CD8-positive, alpha-beta memory T cell (primary cell): ENCODE measurements at regions of chr14 and their contacts with region 1.

Region 1: DNA sequence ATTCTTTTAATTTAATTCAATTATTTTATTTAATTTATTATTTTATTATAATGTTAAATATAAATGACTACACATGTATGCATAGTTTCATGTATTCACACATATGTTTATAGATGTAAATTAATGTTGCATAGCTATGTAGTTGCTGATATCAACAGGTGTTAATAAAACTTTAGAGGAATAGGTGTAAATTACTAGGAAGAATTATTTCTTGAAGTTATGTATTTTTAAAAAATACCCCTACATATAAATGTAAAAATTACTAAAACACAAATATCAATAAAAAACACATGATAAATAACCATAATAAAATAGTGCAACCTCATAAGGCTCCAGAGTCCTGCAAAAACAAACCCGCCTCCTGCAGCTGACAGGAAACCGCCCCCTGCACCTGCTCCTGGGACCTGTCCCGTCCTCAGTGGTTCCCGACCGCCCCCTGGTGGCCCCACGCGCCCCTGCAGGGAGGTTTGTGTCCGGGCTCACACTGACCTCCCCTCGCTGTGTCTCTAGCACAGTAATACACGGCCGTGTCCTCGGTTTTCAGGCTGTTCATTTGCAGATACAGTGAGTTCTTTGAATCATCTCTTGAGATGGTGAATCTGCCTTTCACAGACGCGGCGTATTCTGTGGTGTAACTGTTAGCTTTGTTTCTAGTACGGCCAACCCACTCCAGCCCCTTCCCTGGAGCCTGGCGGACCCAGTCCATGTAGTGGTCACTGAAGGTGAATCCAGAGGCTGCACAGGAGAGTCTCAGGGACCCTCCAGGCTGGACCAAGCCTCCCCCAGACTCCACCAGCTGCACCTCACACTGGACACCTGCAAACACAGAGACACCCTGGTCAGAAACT is 1264.0 kb downstream of the TMEM121 start:
- DNase-seq: peak; percentile 42 to 75 (median 53)
- H3K4me3 ChIP-seq: no peak overlapping the region
- H3K4me3 Mint-ChIP-seq: no peak overlapping the region
- H3K27ac ChIP-seq: no peak overlapping the region
- H3K27ac Mint-ChIP-seq: no peak overlapping the region
- H3K4me1 ChIP-seq: peaks cover 4% of the 10 kb centered on the region
- H3K4me1 Mint-ChIP-seq: peaks cover 6 to 12% (median 11%) of the 10 kb centered on the region in 3 donors
- H3K27me3 ChIP-seq: no peaks in the 10 kb centered on the region
- H3K27me3 Mint-ChIP-seq: peaks cover 11 to 40% of the 10 kb centered on the region in 2 donors

Region 2: GRCh38 chr14:105830171-105830570 is 960.2 kb before region 1 on chr14:
- CTCF ChIA-PET with region 1: no interaction called
- POLR2A ChIA-PET with region 1: no interaction called
- DNase-seq: no peak
- H3K4me3 ChIP-seq: no peak overlapping the region
- H3K4me3 Mint-ChIP-seq: no peak overlapping the region
- H3K27ac ChIP-seq: no peak overlapping the region
- H3K27ac Mint-ChIP-seq: no peak overlapping the region
- H3K4me1 ChIP-seq: no peaks in the 10 kb centered on the region
- H3K4me1 Mint-ChIP-seq: peaks cover 0 to 3% (median 0%) of the 10 kb centered on the region in 3 donors
- H3K27me3 ChIP-seq: no peaks in the 10 kb centered on the region
- H3K27me3 Mint-ChIP-seq: peaks cover 18 to 29% of the 10 kb centered on the region in 2 donors

Region 3: GRCh38 chr14:106776395-106776983 is 13.9 kb before region 1 on chr14:
- CTCF ChIA-PET with region 1: interaction called, 10 read pairs
- POLR2A ChIA-PET with region 1: no interaction called
- DNase-seq: no peak
- H3K4me3 ChIP-seq: no peak overlapping the region
- H3K4me3 Mint-ChIP-seq: no peak overlapping the region
- H3K27ac ChIP-seq: no peak overlapping the region
- H3K27ac Mint-ChIP-seq: no peak overlapping the region
- H3K4me1 ChIP-seq: no peaks in the 10 kb centered on the region
- H3K4me1 Mint-ChIP-seq: peaks cover 9 to 12% (median 9%) of the 10 kb centered on the region in 3 donors
- H3K27me3 ChIP-seq: no peaks in the 10 kb centered on the region
- H3K27me3 Mint-ChIP-seq: peaks cover 15 to 28% of the 10 kb centered on the region in 2 donors

Region 4: DNA sequence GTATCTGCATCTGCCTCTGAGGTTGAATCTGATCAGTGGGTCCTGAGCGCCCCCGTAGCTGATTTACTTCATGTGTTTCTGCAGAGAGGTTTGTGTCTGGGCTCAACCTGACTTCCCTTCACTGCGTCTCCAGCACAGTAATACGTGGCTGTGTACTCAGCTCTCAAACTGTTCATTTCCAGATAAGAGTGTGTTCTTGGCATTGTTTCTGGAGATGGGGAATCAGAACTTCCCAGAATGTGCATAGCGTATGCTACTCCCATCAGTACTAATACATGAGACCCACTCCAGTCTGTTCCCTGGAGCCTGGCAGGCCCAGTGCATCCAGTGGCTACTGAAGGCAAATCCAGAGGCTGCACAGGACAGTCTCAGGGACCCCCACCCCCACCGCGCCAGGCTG is 33.1 kb after region 1 on chr14:
- CTCF ChIA-PET with region 1: no interaction called
- POLR2A ChIA-PET with region 1: no interaction called
- DNase-seq: no peak
- H3K4me3 ChIP-seq: no peak overlapping the region
- H3K4me3 Mint-ChIP-seq: no peak overlapping the region
- H3K27ac ChIP-seq: no peak overlapping the region
- H3K27ac Mint-ChIP-seq: no peak overlapping the region
- H3K4me1 ChIP-seq: no peaks in the 10 kb centered on the region
- H3K4me1 Mint-ChIP-seq: no peaks in the 10 kb centered on the region
- H3K27me3 ChIP-seq: no peaks in the 10 kb centered on the region
- H3K27me3 Mint-ChIP-seq: peaks cover 18 to 55% of the 10 kb centered on the region in 2 donors